ENCODE measurements at regions of chr12 and their contacts with region 1.

Region 1: GRCh38 chr12:123580772-123581171 is 3.6 kb upstream of the TMED2 start:
- DNase-seq: no peak
- ATAC-seq: no peak
- H3K4me3 ChIP-seq: no peak overlapping the region
- H3K27ac ChIP-seq: peak overlapping the region in 3 of 12 donors; percentile 30 to 59 (median 44)
- H3K4me1 ChIP-seq: peaks cover 0 to 31% (median 22%) of the 10 kb centered on the region in 12 donors
- H3K27me3 ChIP-seq: no peaks in the 10 kb centered on the region
- CTCF ChIP-seq: no peak
- POLR2A ChIP-seq: no peak

Region 2: DNA sequence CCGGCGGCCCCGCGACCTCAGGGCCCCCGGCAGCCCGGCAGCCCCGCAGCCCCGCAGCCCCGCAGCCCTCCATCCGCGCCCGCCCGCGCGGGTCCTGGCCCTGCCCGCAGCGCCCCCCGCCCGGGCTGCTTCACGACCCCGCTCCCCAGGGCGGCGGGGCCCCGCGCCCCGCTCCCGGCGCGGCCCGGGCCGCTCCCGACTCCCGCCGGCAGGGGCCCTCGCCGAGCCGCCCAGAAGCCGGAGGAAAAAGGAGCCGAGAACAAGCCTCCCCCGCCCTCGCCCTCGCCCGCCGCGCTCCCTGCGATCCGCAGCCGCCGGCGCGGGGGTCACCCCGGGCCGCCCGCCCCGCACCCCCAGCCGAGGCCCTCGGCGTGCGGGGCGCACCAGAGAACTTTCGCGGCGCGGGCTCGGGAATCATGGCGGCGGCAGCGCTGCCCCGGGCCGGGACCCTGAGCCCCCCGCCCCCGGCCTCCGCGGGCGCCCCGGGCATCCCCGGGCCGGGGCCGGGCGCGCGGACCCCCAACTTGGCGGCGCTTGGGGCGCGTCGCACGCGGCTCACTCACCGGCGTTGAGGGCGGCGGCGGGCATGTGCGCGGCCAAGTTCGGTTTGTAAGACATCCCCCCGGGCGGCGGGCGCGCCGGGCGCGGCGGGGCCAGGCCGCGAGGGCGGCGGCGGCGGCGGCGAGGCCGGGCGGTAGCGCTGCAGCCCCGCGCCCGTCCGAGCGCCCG is 309.6 kb before region 1 on chr12:
- intact Hi-C with region 1: loop called in 1 of 10 experiments (anchors 1 kb)
- DNase-seq: peak; percentile 74 to 88 (median 84)
- ATAC-seq: peak in 3 of 4 donors; percentile 56 to 62 (median 58)
- H3K4me3 ChIP-seq: peak overlapping the region; percentile 61 to 93 (median 76)
- H3K27ac ChIP-seq: peak overlapping the region; percentile 58 to 93 (median 84)
- H3K4me1 ChIP-seq: peaks cover 3 to 39% (median 29%) of the 10 kb centered on the region in 12 donors
- H3K27me3 ChIP-seq: no peaks in the 10 kb centered on the region
- CTCF ChIP-seq: peak; percentile 1 to 75 (median 47)
- POLR2A ChIP-seq: no peak

Region 3: DNA sequence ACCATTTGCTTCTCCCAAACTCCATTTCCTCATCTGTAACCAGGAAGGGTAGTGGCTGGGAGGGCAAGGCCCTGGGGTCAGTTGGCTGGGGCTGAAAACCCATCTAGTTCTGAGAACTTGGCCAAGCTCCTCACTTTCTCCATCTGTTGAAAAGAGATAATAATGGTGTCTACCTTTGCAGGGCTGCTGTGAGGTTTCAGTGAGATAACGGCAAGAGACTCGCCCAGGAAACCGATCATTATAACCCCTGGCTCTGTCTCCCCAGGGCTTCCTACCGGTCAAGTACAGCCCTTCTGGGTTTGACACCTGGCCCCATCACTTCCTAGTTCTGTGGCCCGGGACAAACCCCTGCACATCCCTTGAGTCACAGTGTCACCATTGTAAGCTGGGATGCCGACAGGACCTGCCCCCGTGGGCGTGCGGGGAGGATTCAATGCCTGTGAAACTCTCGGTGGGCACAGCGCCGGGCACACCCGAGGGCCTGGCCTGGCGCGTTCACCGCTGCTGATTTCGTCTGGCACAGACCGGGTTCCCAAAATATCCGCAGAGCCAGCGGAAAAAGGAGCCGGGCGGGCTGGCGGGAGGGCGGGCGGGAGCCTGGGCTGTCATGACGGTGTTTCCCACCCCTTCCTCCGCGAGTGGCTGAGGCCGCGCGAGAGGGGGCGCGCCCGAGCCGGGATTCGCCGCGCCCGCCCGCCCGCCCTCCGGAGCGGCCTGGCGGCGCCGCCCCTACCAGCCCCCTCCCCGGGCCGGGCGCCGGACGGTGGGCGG is 192.4 kb before region 1 on chr12:
- intact Hi-C with region 1: loop called in 3 of 10 experiments (anchors 2 to 5 kb)
- DNase-seq: peak; percentile 86 to 91 (median 88)
- ATAC-seq: peak; percentile 39 to 75 (median 62)
- H3K4me3 ChIP-seq: peak overlapping the region; percentile 25 to 88 (median 62)
- H3K27ac ChIP-seq: peak overlapping the region; percentile 47 to 98 (median 93)
- H3K4me1 ChIP-seq: peaks cover 0 to 59% (median 42%) of the 10 kb centered on the region in 12 donors
- H3K27me3 ChIP-seq: no peaks in the 10 kb centered on the region
- CTCF ChIP-seq: peak in 9 of 12 donors; percentile 9 to 56 (median 39)
- POLR2A ChIP-seq: no peak

Region 4: GRCh38 chr12:123410041-123410412 is 170.7 kb before region 1 on chr12:
- intact Hi-C with region 1: no loop called
- DNase-seq: no peak
- ATAC-seq: no peak
- H3K4me3 ChIP-seq: no peak overlapping the region
- H3K27ac ChIP-seq: no peak overlapping the region
- H3K4me1 ChIP-seq: peaks cover 0 to 11% (median 3%) of the 10 kb centered on the region in 12 donors
- H3K27me3 ChIP-seq: no peaks in the 10 kb centered on the region
- CTCF ChIP-seq: no peak
- POLR2A ChIP-seq: no peak

Region 5: GRCh38 chr12:123457980-123458783 is 122.6 kb before region 1 on chr12 and contains the start of gene SNRNP35:
- intact Hi-C with region 1: loop called in 4 of 10 experiments (anchors 5 kb)
- DNase-seq: peak; percentile 81 to 91 (median 84)
- ATAC-seq: peak; percentile 85 to 91 (median 90)
- H3K4me3 ChIP-seq: peak within 1 kb of the TSS; percentile 63 to 93 (median 79)
- H3K27ac ChIP-seq: peak within 1 kb of the TSS; percentile 94 to 99 (median 98)
- H3K4me1 ChIP-seq: peaks cover 0 to 25% (median 12%) of the 10 kb centered on the region in 12 donors
- H3K27me3 ChIP-seq: no peaks in the 10 kb centered on the region
- CTCF ChIP-seq: peak in 1 of 12 donors; percentile 4
- POLR2A ChIP-seq: peak in 1 of 2 donors; percentile 43
- total RNA-seq, gene SNRNP35: 18.5 to 27.4 (median 20.0) TPM

Region 6: GRCh38 chr12:123478762-123479161 is 102.0 kb before region 1 on chr12:
- intact Hi-C with region 1: no loop called
- DNase-seq: peak; percentile 73 to 88 (median 77)
- ATAC-seq: peak; percentile 86 to 90 (median 88)
- H3K4me3 ChIP-seq: peak overlapping the region in 1 of 12 donors; percentile 32
- H3K27ac ChIP-seq: peak overlapping the region; percentile 71 to 95 (median 86)
- H3K4me1 ChIP-seq: peaks cover 0 to 51% (median 23%) of the 10 kb centered on the region in 12 donors
- H3K27me3 ChIP-seq: no peaks in the 10 kb centered on the region
- CTCF ChIP-seq: no peak
- POLR2A ChIP-seq: no peak

Region 7: DNA sequence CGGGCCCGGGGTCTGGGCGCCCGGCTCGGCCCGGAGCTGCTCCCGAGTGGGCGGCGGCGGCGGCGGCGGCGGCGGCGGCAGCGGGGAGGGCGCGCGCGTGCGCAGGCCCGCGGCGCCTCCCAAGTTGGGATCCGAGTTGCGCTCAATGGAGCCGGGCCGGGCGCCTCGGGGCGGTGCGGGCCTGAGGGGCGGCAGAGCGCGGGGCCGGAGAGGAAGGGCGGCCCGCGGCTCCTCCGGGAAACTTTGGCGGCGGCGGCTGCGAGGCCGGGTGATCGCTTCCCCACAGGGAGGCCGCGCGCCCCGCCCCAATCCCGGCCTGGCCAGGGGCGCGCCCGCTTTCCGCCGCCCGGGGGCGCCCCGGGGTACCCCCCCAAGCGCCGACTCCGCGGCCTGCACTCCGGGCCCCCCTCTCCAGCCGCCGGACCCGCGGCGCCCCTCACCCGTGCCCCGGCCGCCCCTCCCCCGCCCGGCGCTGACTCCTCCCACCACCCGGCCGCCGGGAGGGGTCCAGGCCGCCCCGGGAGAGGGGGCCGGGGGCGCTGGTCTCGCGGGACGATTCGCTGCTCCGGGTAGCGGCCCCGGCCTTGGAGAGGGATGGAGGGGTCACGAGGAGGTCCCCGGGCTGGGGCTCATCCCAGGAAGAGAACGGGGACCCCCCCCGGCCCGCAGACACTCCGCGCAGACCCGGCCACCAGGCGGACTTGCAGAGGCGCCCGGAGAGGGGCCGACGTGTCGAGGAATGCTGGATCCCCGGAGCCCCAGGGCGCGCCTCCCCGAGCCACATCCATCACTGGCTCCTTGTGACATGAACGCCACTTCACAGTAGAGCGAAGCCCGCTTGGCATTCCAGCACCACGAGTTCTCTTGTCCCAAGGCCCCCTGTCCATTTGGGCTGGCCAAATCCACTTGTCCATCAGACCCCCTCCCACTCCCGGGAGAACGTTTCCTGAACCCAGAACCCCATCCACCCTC is 46.8 kb before region 1 on chr12 and contains the start of gene RILPL1:
- intact Hi-C with region 1: loop called (anchors 1 to 5 kb)
- DNase-seq: peak; percentile 56 to 79 (median 64)
- ATAC-seq: peak; percentile 18 to 81 (median 56)
- H3K4me3 ChIP-seq: peak within 1 kb of the TSS; percentile 63 to 98 (median 76)
- H3K27ac ChIP-seq: peak within 1 kb of the TSS; percentile 86 to 97 (median 94)
- H3K4me1 ChIP-seq: peaks cover 0 to 43% (median 29%) of the 10 kb centered on the region in 12 donors
- H3K27me3 ChIP-seq: peaks cover 0 to 8% (median 0%) of the 10 kb centered on the region in 9 donors
- CTCF ChIP-seq: peak in 10 of 12 donors; percentile 17 to 62 (median 46)
- POLR2A ChIP-seq: peak in 1 of 2 donors; percentile 30
- total RNA-seq, gene RILPL1: 64.1 to 119 (median 79.4) TPM

Region 8: DNA sequence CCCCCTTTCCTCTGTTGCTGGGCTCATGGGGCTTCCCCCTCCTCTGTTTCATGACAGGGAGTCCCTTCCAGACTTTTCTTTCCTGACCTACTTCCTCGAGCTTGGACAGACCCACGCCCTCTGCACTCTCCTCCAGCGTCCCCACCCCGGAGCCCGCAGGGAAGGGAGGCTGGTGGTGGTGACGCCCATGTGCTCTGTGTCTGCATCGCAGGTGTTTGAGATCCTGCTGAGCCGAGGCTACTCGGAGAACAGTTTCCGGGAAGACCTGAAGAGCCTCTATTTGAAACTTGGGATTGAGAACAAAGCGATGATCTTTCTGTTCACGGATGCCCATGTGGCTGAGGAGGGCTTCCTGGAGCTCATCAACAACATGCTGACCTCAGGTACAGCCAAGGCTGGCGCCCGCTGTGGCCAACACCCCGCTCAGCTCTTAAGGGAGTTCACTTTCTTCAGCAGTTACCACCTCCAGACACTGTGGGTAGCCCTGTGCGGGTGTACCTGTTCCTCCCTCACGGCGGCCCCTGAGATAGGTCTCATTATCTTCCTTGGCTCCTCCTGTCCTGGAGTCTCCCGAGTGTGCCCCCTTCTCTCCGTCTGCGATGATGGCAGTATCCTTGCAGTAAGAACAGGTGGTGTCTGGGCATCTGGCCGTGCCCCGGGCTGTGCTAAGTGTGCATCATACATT is 306.3 kb after region 1 on chr12:
- intact Hi-C with region 1: no loop called
- DNase-seq: no peak
- ATAC-seq: peak in 1 of 4 donors; percentile 13
- H3K4me3 ChIP-seq: no peak overlapping the region
- H3K27ac ChIP-seq: no peak overlapping the region
- H3K4me1 ChIP-seq: no peaks in the 10 kb centered on the region
- H3K27me3 ChIP-seq: peaks cover 0 to 34% (median 4%) of the 10 kb centered on the region in 9 donors
- CTCF ChIP-seq: no peak
- POLR2A ChIP-seq: no peak

Measured in heart left ventricle (tissue), 16 donors.